Calu3 (cell line): ENCODE measurements at regions of chr3 and their contacts with region 1.

Region 1: GRCh38 chr3:194134757-194135528 is 1.0 kb upstream of the HES1 start:
- DNase-seq: peak; percentile 100
- H3K4me3 Mint-ChIP-seq: peak overlapping the region; percentile 92
- H3K27ac Mint-ChIP-seq: peak overlapping the region; percentile 83
- H3K4me1 Mint-ChIP-seq: peaks cover 52% of the 10 kb centered on the region
- H3K27me3 Mint-ChIP-seq: no peaks in the 10 kb centered on the region
- CTCF ChIP-seq: no peak

Region 2: GRCh38 chr3:193665370-193665989 is 469.5 kb before region 1 on chr3:
- CTCF ChIA-PET with region 1: interaction called, 3 read pairs
- intact Hi-C with region 1: loop called (anchors 2 kb)
- DNase-seq: no peak
- H3K4me3 Mint-ChIP-seq: no peak overlapping the region
- H3K27ac Mint-ChIP-seq: no peak overlapping the region
- H3K4me1 Mint-ChIP-seq: no peaks in the 10 kb centered on the region
- H3K27me3 Mint-ChIP-seq: no peaks in the 10 kb centered on the region
- CTCF ChIP-seq: peak; percentile 74

Region 3: GRCh38 chr3:193842029-193842798 is 292.7 kb before region 1 on chr3:
- CTCF ChIA-PET with region 1: interaction called, 11 read pairs
- intact Hi-C with region 1: loop called (anchors 2 kb)
- DNase-seq: no peak
- H3K4me3 Mint-ChIP-seq: peak overlapping the region; percentile 59
- H3K27ac Mint-ChIP-seq: peak overlapping the region; percentile 96
- H3K4me1 Mint-ChIP-seq: peaks cover 94% of the 10 kb centered on the region
- H3K27me3 Mint-ChIP-seq: no peaks in the 10 kb centered on the region
- CTCF ChIP-seq: no peak

Region 4: DNA sequence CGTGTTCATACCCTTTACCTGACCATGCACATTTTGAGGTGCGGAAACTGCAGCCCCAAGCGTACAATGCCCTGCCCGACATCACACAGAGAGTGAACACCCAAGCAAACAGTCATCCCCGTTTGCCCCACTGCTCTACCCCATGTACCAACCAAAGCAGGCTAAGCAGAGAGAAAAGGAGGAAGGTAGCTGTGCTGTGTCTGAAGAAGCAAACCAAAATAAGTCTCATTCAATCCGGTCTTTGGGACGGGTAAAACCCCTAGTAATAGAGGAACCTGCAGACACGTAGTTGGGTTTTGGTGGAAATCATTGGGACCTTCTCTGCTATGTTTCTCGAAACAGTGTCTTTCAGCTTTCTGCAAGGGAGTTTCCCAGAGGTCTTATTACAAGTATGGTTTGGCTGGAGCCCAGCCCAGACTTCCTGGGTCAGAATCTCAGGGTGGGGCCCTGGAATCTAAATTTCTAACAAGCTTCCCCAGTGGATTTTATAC is 163.6 kb before region 1 on chr3:
- CTCF ChIA-PET with region 1: interaction called, 6 read pairs
- intact Hi-C with region 1: loop called (anchors 1 kb)
- DNase-seq: peak; percentile 66
- H3K4me3 Mint-ChIP-seq: peak overlapping the region; percentile 56
- H3K27ac Mint-ChIP-seq: peak overlapping the region; percentile 29
- H3K4me1 Mint-ChIP-seq: peaks cover 60% of the 10 kb centered on the region
- H3K27me3 Mint-ChIP-seq: no peaks in the 10 kb centered on the region
- CTCF ChIP-seq: no peak

Region 5: DNA sequence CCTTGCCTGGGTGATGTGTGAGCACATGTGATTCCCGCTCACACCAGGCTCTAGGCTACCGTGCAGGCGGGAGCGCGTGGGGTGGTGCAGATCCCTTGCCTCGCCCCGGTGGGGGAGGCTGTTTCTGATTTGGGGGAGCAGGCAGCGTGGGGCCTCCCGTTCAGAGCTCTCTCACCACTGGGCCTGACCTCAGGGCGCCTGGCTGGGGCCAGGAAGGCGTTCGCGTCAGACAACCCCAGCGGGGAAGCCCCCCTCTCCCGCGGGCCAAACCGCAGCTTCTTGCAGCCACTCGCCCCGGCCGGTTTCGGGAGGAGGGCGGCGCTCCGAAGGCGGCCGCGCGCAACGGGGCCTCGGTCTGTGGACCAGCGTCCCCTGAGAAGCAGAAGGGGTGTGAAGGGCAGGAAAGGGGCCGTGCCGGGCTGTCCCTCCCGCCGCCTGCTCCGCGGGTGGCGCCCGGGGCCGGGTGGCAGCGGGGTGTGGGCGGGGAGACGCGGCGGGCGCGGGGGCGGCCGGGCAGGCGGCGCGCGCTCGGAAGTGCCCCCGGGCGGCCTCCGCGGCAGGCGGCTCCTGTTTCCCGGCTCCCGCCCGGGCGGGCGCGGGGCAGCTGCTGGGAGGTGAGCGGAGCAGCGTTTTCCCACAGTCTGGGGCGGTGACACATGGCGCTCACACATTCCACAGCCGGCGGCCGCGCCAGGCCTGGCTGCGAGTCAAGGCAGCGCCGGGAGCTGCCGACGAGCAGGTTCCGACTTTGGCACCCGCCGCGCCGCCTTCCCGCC is 64.1 kb before region 1 on chr3:
- CTCF ChIA-PET with region 1: interaction called, 5 read pairs
- intact Hi-C with region 1: loop called (anchors 2 kb)
- DNase-seq: peak; percentile 91
- H3K4me3 Mint-ChIP-seq: peak overlapping the region; percentile 72
- H3K27ac Mint-ChIP-seq: peak overlapping the region; percentile 65
- H3K4me1 Mint-ChIP-seq: peaks cover 40% of the 10 kb centered on the region
- H3K27me3 Mint-ChIP-seq: no peaks in the 10 kb centered on the region
- CTCF ChIP-seq: no peak

Region 6: DNA sequence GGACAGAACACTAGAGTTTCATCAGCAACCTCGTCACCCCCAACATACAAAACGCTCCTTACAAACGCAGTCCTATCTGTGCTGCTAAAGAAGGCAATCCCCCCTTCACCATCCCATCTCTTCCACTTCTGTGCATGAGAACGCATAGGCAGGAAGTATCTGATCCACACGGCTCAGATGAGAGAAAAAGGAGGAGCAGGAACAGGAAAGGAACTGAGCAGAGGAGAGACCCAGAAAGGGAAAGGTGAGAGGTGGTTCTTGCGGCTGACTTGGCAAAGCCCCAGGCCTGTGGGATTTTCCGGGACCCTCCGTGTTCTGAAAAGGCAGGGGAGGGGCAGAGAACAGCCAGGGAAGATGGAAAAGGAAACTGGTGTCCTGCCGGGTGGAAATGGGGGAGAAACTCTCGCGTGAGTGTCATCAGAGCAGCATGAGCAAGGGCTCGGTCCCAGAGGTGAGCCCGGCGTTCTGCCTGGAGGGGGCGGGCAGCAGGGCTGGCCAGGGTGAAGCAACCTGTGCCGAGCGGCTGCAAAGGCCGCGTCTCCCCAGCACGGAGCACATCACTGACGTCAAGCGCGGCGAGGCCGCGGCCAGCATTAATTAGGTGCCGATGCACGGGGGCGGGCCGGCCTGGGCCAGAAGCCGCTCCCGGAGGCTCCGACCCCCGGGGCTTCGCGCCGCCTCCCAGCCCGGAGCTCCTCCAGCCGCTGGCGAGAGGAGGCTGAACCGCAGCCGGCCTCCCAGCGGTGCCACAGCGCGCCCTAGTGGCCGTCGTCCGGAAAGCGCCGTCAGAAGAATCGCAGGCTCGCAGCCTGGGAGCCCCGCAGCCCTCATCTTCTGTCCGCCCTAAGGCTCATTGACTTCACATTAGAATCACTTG is 180.4 kb after region 1 on chr3:
- CTCF ChIA-PET with region 1: interaction called, 69 read pairs
- intact Hi-C with region 1: no loop called
- DNase-seq: peak; percentile 98
- H3K4me3 Mint-ChIP-seq: peak overlapping the region; percentile 69
- H3K27ac Mint-ChIP-seq: peak overlapping the region; percentile 87
- H3K4me1 Mint-ChIP-seq: peaks cover 36% of the 10 kb centered on the region
- H3K27me3 Mint-ChIP-seq: no peaks in the 10 kb centered on the region
- CTCF ChIP-seq: peak; percentile 99